ENCODE measurements at regions of chr2 and their contacts with region 1.

Region 1: GRCh38 chr2:70948337-70949003 is 12.8 kb downstream of the ATP6V1B1 start:
- DNase-seq: peak; percentile 62 to 74 (median 72)
- H3K4me3 ChIP-seq: peak overlapping the region; percentile 6 to 36
- H3K4me3 Mint-ChIP-seq: peak overlapping the region; percentile 78 to 92 (median 84)
- H3K27ac ChIP-seq: no peak overlapping the region
- H3K27ac Mint-ChIP-seq: peak overlapping the region in 3 of 7 donors; percentile 5 to 87 (median 78)
- H3K4me1 ChIP-seq: peaks cover 8% of the 10 kb centered on the region
- H3K4me1 Mint-ChIP-seq: peaks cover 8 to 17% (median 13%) of the 10 kb centered on the region in 4 donors
- H3K27me3 ChIP-seq: peaks cover 5% of the 10 kb centered on the region
- H3K27me3 Mint-ChIP-seq: peaks cover 7 to 9% of the 10 kb centered on the region in 2 donors

Region 2: DNA sequence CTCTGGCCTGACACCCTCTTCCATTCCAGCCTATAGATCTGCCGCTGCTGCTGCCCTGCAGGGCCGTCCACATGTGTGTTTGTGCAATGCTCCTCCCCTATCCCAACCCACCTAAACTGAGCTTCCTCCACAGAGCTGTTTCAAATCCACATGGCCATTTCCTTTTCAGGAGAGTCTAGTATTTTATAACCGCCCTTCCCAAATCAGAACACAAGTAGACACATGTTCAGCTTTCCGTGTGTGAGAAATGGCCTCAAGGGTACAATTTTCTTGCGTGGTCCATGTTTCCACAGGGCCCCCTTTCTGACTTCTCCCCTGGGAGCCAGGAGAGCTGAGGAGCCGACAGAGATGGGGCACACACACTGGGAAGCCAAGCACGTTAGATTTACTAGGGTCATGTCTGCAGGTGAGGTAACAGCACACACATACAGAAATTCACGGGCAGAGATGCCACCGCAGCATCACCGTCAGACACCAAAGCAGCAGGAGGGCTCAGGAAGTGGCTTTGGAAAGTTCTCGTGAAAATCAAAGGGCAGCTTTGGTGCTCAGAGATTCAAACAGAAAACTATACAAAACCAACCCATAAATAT is 292.0 kb before region 1 on chr2:
- CTCF ChIA-PET with region 1: interaction called, 12 read pairs
- POLR2A ChIA-PET with region 1: no interaction called
- intact Hi-C with region 1: loop called (anchors 1 kb)
- DNase-seq: peak; percentile 31 to 59 (median 43)
- H3K4me3 ChIP-seq: no peak overlapping the region
- H3K4me3 Mint-ChIP-seq: peak overlapping the region in 2 of 8 donors; percentile 9 to 42
- H3K27ac ChIP-seq: no peak overlapping the region
- H3K27ac Mint-ChIP-seq: peak overlapping the region in 4 of 7 donors; percentile 23 to 75 (median 32)
- H3K4me1 ChIP-seq: peaks cover 13% of the 10 kb centered on the region
- H3K4me1 Mint-ChIP-seq: peaks cover 11 to 21% (median 15%) of the 10 kb centered on the region in 4 donors
- H3K27me3 ChIP-seq: no peaks in the 10 kb centered on the region
- H3K27me3 Mint-ChIP-seq: peaks cover 16 to 28% of the 10 kb centered on the region in 2 donors

Region 3: DNA sequence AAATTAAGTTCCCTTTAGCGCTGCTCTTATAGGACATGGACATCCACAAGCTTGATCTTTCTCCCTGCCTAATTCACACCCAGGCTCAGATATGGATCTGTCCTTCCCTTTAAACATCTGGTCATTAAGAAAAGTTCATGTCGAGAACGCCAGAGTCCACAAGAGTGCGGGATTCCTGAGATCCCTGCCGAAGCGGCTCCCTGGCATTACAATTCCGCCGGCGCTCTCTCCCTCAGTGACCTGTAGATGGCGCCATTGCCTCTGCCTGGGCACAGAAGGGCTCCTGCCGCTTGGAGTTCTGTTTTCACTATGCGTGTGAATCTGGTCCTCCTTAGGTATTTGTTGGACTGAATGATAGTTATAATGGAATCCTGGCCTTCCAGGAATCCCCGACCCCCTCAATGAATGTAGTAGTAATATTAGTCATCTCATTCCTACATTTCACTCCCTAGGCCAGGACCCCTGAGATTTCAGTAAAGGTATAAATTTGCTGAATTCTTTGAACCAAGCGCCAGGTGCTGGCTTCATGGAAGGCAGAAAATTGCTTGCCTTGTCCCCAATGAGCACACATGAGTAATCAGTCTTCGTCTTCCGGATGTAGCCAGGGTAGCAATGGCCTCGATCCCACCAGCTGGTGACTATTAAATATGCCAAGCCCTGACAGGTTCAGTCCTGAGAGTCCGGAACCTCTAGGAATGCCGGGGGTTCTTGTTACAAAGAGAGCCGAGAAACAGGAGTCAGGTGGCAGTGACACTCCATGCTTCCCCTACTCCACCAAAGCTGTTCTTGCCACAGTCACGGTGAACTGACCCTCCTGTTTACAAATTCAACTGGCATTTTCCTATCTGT is 86.5 kb before region 1 on chr2:
- CTCF ChIA-PET with region 1: interaction called, 10 read pairs
- POLR2A ChIA-PET with region 1: no interaction called
- intact Hi-C with region 1: loop called (anchors 2 kb)
- DNase-seq: peak; percentile 49 to 60 (median 56)
- H3K4me3 ChIP-seq: no peak overlapping the region
- H3K4me3 Mint-ChIP-seq: no peak overlapping the region
- H3K27ac ChIP-seq: no peak overlapping the region
- H3K27ac Mint-ChIP-seq: no peak overlapping the region
- H3K4me1 ChIP-seq: no peaks in the 10 kb centered on the region
- H3K4me1 Mint-ChIP-seq: peaks cover 0 to 3% (median 1%) of the 10 kb centered on the region in 4 donors
- H3K27me3 ChIP-seq: peaks cover 12% of the 10 kb centered on the region
- H3K27me3 Mint-ChIP-seq: peaks cover 29 to 50% of the 10 kb centered on the region in 2 donors

Region 4: GRCh38 chr2:70871398-70872211 is 76.9 kb before region 1 on chr2:
- CTCF ChIA-PET with region 1: interaction called, 77 read pairs
- POLR2A ChIA-PET with region 1: no interaction called
- intact Hi-C with region 1: loop called (anchors 1 kb)
- DNase-seq: peak; percentile 58 to 66 (median 63)
- H3K4me3 ChIP-seq: peak overlapping the region in 1 of 2 donors; percentile 8
- H3K4me3 Mint-ChIP-seq: peak overlapping the region in 5 of 8 donors; percentile 13 to 54 (median 30)
- H3K27ac ChIP-seq: no peak overlapping the region
- H3K27ac Mint-ChIP-seq: no peak overlapping the region
- H3K4me1 ChIP-seq: peaks cover 9% of the 10 kb centered on the region
- H3K4me1 Mint-ChIP-seq: peaks cover 0 to 6% (median 3%) of the 10 kb centered on the region in 4 donors
- H3K27me3 ChIP-seq: peaks cover 6% of the 10 kb centered on the region
- H3K27me3 Mint-ChIP-seq: peaks cover 28 to 37% of the 10 kb centered on the region in 2 donors

Region 5: GRCh38 chr2:70977605-70978205 is 29.2 kb after region 1 on chr2:
- CTCF ChIA-PET with region 1: interaction called, 10 read pairs
- POLR2A ChIA-PET with region 1: no interaction called
- intact Hi-C with region 1: no loop called
- DNase-seq: peak in 3 of 5 donors; percentile 13 to 54 (median 22)
- H3K4me3 ChIP-seq: peak overlapping the region; percentile 65 to 76
- H3K4me3 Mint-ChIP-seq: peak overlapping the region; percentile 88 to 95 (median 90)
- H3K27ac ChIP-seq: peak overlapping the region; percentile 60
- H3K27ac Mint-ChIP-seq: peak overlapping the region; percentile 86 to 97 (median 93)
- H3K4me1 ChIP-seq: peaks cover 11% of the 10 kb centered on the region
- H3K4me1 Mint-ChIP-seq: peaks cover 10 to 25% (median 17%) of the 10 kb centered on the region in 4 donors
- H3K27me3 ChIP-seq: no peaks in the 10 kb centered on the region
- H3K27me3 Mint-ChIP-seq: peaks cover 0 to 2% of the 10 kb centered on the region in 2 donors